ENCODE measurements at regions of chr16 and their contacts with region 1.

Region 1: DNA sequence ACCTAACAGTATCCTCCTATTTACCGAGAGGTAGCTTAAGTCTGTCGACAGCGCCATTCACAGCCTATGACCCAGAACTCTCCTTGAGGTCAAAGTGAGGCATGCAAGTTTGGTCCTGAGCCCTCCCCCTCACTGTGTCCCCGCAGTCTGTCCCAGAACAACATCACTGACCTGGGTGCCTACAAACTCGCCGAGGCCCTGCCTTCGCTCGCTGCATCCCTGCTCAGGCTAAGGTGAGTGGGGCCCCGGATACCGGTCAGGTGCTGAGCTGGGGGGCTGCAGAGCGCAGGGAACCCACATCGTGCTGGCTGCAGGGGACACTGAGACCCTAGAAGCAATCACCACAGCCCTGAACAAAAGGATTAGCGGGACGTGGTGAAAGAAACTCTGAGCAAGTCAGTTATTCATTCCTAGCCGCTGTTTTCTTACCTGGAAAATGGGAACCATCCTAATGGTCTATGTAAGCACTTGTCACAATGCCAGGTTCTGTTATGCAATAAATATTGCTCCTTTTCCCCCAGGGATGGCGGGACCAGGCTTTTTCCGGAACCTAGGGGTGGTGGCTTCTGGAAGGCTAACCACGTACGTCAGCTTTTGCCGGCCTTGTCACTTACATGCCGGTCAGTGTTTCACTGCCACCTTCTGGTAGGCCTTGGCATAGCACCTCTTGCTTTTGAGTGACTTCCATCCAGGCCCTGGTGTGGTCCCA is 23.8 kb downstream of the DEXI start:
- DNase-seq: peak; percentile 93
- ATAC-seq: peak; percentile 80

Region 2: GRCh38 chr16:10743610-10744393 is 174.6 kb before region 1 on chr16 and contains the start of gene NUBP1:
- intact Hi-C with region 1: loop called in 1 of 2 experiments (anchors 2 kb)
- DNase-seq: peak; percentile 97
- ATAC-seq: peak; percentile 97 to 98
- total RNA-seq, gene NUBP1: 38.1 to 38.9 TPM

Region 3: DNA sequence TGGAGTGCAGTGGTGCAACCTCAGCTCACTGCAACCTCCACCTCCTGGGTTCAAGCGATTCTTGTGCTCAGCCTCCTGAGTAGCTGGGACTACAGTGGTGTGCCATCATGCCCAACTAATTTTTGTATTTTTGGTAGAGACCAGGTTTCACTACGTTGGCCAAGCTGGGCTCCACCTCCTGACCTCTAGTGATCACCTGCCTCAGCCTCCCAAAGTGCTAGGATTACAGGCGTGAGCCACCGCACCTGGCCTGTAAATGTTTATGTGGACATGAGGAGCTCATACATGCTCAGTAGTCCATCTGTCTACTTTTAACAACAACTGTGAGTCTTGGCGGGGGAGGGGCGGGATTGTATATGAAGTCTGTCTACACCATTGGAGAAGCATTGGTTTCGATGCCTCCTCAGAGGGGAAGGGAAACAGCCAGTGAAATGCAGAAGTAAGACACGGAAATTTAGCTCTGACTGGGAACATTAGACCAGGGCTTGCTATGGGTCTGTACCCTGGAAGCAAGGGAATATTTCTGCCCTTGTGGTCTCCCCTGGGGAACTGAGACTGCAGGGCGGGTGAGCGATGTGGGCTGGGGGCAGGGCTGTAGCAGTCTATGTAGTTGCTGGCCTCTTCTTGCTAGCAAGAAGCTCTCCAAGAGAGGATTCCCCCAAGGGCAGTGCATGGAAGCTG is 165.5 kb before region 1 on chr16:
- intact Hi-C with region 1: loop called in 1 of 2 experiments (anchors 5 kb)
- DNase-seq: peak; percentile 70
- ATAC-seq: peak; percentile 33 to 38

Region 4: DNA sequence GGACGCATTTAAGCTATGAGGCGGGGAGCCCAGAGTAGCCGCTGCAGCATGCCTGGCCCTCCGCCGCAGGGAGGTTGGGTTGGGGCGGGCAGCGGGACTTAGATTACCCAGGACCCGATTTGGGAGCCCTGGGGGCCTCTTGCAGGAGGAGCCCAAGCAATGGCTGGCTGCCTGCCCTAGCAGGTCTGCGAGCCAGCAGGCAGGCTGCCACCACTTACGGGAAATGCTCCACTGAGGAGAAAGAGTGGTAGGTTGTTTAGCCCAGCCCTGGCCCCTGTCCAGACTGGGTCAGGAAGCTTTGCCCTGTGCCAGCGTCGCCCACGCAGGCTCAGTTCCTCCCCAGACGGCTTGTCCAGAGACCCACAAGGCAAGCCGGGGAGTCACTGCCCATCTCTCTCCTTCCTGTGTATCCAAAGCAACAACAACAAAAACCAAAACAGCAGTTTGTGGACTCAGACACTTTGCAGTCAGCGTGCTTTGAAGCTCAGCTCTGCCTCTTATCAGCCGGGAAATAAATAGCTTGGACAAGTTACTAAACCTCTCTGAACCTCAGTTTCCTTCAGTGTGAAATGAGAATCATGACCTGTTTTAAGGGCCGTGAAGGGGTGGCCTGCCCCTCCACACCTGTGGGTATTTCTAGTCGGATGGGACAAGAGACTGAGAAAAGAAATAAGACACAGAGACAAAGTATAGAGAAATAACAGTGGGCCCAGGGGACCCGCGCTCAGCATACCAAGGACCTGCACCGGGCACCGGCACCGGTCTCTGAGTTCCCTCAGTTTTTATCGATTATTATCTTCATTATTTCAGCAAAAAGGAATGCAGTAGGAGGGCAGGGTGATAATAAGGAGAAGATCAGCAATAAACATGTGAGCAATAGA is 89.4 kb before region 1 on chr16:
- intact Hi-C with region 1: loop called (anchors 5 to 10 kb)
- DNase-seq: peak; percentile 97
- ATAC-seq: peak; percentile 87 to 89

Region 5: GRCh38 chr16:10835281-10835931 is 83.0 kb before region 1 on chr16:
- intact Hi-C with region 1: loop called in 1 of 2 experiments (anchors 10 kb)
- DNase-seq: no peak
- ATAC-seq: no peak

Region 6: GRCh38 chr16:10868596-10869469 is 49.6 kb before region 1 on chr16:
- intact Hi-C with region 1: no loop called
- DNase-seq: peak; percentile 58
- ATAC-seq: peak; percentile 54 to 87

Measured in left cardiac atrium (tissue), 4 donors.